ENCODE measurements at regions of chr1 and their contacts with region 1.

Region 1: GRCh38 chr1:227828786-227829185 is 13.3 kb downstream of the PRSS38 start:
- DNase-seq: no peak
- H3K4me3 ChIP-seq: no peak overlapping the region
- H3K27ac ChIP-seq: no peak overlapping the region
- H3K4me1 ChIP-seq: no peaks in the 10 kb centered on the region
- H3K27me3 ChIP-seq: no peaks in the 10 kb centered on the region
- CTCF ChIP-seq: no peak
- EP300 ChIP-seq: no peak
- POLR2A ChIP-seq: no peak

Region 2: GRCh38 chr1:227846260-227846858 is 17.6 kb after region 1 on chr1:
- intact Hi-C with region 1: loop called in 1 of 4 experiments (anchors 2 kb)
- DNase-seq: no peak
- H3K4me3 ChIP-seq: no peak overlapping the region
- H3K27ac ChIP-seq: no peak overlapping the region
- H3K4me1 ChIP-seq: no peaks in the 10 kb centered on the region
- H3K27me3 ChIP-seq: no peaks in the 10 kb centered on the region
- CTCF ChIP-seq: no peak
- EP300 ChIP-seq: no peak
- POLR2A ChIP-seq: no peak

Region 3: GRCh38 chr1:227864882-227865281 is 36.1 kb after region 1 on chr1:
- intact Hi-C with region 1: no loop called
- DNase-seq: no peak
- H3K4me3 ChIP-seq: no peak overlapping the region
- H3K27ac ChIP-seq: no peak overlapping the region
- H3K4me1 ChIP-seq: no peaks in the 10 kb centered on the region
- H3K27me3 ChIP-seq: no peaks in the 10 kb centered on the region
- CTCF ChIP-seq: no peak
- EP300 ChIP-seq: no peak
- POLR2A ChIP-seq: no peak

Region 4: DNA sequence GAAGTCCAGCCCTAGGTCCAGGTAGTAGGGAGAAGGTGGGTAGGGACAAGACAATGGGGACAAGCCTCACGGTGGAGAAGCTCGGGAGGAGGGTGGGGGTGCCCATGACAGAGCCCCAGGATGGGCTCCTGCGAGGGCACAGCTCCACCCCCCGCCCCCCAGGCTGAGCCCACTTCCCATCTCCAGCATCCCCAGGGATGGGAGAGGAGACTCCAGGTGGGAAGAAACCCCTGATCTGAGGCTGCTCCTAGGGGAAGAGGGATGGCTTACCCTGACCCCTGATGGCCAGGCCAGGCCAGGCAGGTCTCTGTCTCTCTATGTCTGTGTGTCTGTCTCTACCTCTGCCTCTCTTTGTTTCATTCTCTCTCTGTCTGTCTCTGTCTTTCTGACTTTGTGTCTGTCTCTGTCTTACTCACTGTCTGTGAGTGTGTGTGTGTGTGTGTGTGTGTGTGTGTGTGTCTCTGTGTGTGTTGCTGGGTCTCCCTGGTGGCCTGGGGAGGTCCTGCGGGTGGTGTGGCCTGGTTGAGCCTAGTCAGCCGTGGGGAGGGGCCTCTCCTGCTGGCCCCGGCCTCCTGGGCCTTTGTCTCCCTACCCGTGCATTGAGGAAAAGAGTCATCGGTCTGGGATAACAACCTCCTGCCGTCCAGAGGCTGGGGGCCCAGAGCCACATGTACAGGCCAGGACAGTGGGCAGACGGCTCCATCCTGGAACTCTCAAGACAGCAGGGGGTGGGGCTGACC is 73.3 kb after region 1 on chr1:
- intact Hi-C with region 1: no loop called
- DNase-seq: peak in 2 of 5 donors; percentile 17 to 33
- H3K4me3 ChIP-seq: no peak overlapping the region
- H3K27ac ChIP-seq: no peak overlapping the region
- H3K4me1 ChIP-seq: no peaks in the 10 kb centered on the region
- H3K27me3 ChIP-seq: no peaks in the 10 kb centered on the region
- CTCF ChIP-seq: no peak
- EP300 ChIP-seq: no peak
- POLR2A ChIP-seq: no peak

Region 5: DNA sequence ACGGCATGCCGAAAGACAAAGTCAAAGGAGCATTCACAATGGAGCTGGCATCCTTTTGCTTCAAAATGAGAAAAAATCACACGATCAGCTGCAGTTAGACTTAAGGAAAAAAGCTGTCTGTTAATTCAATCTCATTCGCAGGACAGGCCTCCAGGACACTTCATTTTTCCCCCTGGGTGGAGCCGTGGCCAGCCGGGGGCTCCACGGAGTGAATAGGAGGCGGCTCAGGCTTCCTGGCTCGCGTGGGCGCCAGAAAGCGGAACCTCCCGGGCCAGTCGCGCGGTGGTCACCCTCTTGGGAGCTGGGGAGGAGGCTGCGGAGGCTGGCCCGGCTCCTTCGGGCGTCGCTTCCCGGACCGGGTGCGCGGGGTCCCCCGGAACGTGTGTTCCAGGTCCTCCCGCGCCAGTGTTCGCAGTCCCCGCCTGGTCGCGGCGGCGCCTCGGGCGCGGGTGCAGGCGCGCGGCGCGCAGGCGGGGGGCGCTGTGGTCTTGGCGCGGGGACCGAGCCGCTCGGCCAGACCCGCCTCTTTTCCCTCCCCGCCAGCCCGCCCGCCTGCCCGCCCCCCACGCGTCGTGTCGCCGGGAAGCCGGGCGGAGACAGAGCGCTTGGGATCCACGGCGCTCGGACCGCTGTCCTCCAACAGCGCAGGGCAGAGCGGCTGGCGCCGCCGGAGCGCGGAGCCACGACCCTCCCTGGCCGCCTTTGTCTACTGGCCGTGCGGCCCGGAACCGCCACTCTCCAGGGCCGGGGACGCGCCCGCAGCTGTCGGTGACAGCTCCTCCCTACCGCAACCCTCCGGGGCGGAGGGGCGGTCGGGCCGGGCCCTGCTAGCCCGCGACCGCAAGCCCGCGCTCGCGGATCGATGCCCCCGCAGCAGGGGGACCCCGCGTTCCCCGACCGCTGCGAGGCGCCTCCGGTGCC is 906.4 kb after region 1 on chr1 and contains the start of gene RHOU:
- intact Hi-C with region 1: no loop called
- DNase-seq: peak; percentile 80 to 89 (median 82)
- H3K4me3 ChIP-seq: peak within 1 kb of the TSS; percentile 82
- H3K27ac ChIP-seq: peak within 1 kb of the TSS; percentile 68 to 82
- H3K4me1 ChIP-seq: peaks cover 2% of the 10 kb centered on the region
- H3K27me3 ChIP-seq: no peaks in the 10 kb centered on the region
- CTCF ChIP-seq: peak; percentile 54 to 98 (median 98)
- EP300 ChIP-seq: no peak
- POLR2A ChIP-seq: peak; percentile 55
- total RNA-seq, gene RHOU: 20.5 to 131 (median 53.8) TPM